Dorsolateral prefrontal cortex (tissue), 120 donors: ENCODE measurements at regions of chr4 and their contacts with region 1.

Region 1: GRCh38 chr4:139453371-139454110 is 380 bp upstream of the RAB33B start:
- DNase-seq: peak; percentile 74 to 96 (median 92)
- H3K4me3 ChIP-seq: peak overlapping the region; percentile 62 to 97 (median 88)
- H3K27ac ChIP-seq: peak overlapping the region; percentile 69 to 99 (median 92)
- H3K27me3 ChIP-seq: no peaks in the 10 kb centered on the region
- CTCF ChIP-seq: peak in 24 of 56 donors; percentile 1 to 47 (median 16)

Region 2: DNA sequence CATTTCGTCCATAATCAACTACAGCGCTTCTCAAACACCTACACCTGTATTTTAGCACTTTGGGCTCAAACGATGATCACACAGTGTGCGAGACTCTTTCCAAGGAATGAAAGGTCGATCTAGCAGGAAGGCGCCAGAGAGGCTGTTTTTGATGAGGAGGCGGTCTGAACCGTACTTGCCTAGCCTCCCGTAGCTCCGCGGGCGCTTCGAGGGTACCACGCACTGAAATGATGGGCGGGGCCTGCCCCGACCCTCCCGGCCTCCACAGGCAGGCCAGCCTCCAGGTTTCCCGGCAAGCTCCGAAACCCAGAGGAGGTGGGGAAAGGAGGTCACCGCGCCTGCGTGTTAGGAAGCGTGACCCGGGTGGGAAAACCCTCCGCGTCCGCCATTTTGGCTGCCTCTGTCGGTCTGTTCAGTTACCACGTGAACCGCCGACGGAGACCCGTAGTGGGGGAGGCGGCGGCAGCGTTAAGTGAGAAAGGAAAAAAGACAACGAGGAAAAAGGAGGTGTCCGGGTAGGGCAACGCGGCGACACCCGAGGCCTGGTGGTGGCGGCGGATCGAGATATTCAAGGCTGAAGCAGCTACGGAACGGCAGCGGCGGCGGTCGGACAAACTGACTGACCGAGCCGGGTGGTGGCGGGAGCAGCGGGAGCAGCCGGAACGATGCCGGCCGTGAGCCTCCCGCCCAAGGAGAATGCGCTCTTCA is 152.3 kb before region 1 on chr4 and contains the start of gene NAA15:
- intact Hi-C with region 1: loop called in 1 of 2 experiments (anchors 5 kb)
- DNase-seq: peak; percentile 95 to 98 (median 96)
- H3K4me3 ChIP-seq: peak within 1 kb of the TSS; percentile 63 to 100 (median 95)
- H3K27ac ChIP-seq: peak within 1 kb of the TSS; percentile 40 to 96 (median 90)
- H3K27me3 ChIP-seq: no peaks in the 10 kb centered on the region
- CTCF ChIP-seq: peak in 42 of 56 donors; percentile 5 to 66 (median 34)
- total RNA-seq, gene NAA15: 28.2 to 47.1 (median 37.9) TPM

Region 3: GRCh38 chr4:139522457-139522856 is 68.9 kb after region 1 on chr4:
- intact Hi-C with region 1: loop called in 1 of 2 experiments (anchors 5 kb)
- DNase-seq: no peak
- H3K4me3 ChIP-seq: peak overlapping the region in 1 of 59 donors; percentile 12
- H3K27ac ChIP-seq: peak overlapping the region in 48 of 59 donors; percentile 5 to 82 (median 59)
- H3K27me3 ChIP-seq: no peaks in the 10 kb centered on the region
- CTCF ChIP-seq: peak in 5 of 56 donors; percentile 7 to 17 (median 13)